Activated naive CD4-positive, alpha-beta T cell treated with anti-CD3 and anti-CD28 coated beads for 36 hours (primary cell): ENCODE measurements at regions of chr2 and their contacts with region 1.

Region 1: DNA sequence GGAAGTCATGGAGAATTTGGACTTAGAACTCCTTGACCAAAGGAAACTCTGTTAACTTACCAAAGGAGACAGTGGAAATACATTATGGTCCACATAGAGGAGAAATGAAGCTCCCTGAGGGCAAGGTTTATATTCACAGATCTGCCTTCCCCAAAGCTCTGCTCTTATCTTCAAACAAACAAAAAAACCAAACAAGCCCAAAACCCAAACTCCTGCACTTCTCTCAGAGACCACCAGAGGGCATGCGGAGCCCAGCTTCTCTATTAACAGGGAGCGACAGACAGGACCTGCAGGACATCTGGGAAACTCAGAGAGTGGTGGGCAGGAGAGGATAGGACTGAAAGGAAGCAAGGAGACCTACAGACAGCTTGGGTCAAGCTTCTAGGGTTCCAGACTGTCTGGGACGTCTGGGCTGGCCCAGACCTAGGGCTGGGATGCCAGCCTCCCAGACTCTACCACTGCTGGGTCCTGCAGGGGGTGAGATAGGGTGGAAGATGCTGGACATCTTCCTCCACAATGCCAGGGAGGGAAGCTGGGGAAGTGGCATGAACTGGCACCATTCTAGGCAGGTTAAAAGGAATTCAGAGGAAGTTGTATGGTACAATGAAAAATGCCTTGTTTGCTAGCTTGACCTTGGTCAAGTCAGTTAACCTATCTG is 4.0 kb upstream of the WNT10A start:
- DNase-seq: peak; percentile 86
- H3K4me3 Mint-ChIP-seq: no peak overlapping the region
- H3K27ac Mint-ChIP-seq: no peak overlapping the region
- H3K4me1 Mint-ChIP-seq: peaks cover 39% of the 10 kb centered on the region
- H3K27me3 Mint-ChIP-seq: peaks cover 41% of the 10 kb centered on the region

Region 2: GRCh38 chr2:218860950-218861381 is 15.7 kb before region 1 on chr2:
- CTCF ChIA-PET with region 1: interaction called, 22 read pairs
- intact Hi-C with region 1: no loop called
- DNase-seq: no peak
- H3K4me3 Mint-ChIP-seq: no peak overlapping the region
- H3K27ac Mint-ChIP-seq: no peak overlapping the region
- H3K4me1 Mint-ChIP-seq: peaks cover 13% of the 10 kb centered on the region
- H3K27me3 Mint-ChIP-seq: peaks cover 62% of the 10 kb centered on the region

Region 3: GRCh38 chr2:218892693-218893348 is 16.1 kb after region 1 on chr2:
- CTCF ChIA-PET with region 1: interaction called, 947 read pairs
- intact Hi-C with region 1: loop called (anchors 1 kb)
- DNase-seq: peak; percentile 90
- H3K4me3 Mint-ChIP-seq: peak overlapping the region; percentile 75
- H3K27ac Mint-ChIP-seq: peak overlapping the region; percentile 76
- H3K4me1 Mint-ChIP-seq: peaks cover 45% of the 10 kb centered on the region
- H3K27me3 Mint-ChIP-seq: no peaks in the 10 kb centered on the region

Region 4: DNA sequence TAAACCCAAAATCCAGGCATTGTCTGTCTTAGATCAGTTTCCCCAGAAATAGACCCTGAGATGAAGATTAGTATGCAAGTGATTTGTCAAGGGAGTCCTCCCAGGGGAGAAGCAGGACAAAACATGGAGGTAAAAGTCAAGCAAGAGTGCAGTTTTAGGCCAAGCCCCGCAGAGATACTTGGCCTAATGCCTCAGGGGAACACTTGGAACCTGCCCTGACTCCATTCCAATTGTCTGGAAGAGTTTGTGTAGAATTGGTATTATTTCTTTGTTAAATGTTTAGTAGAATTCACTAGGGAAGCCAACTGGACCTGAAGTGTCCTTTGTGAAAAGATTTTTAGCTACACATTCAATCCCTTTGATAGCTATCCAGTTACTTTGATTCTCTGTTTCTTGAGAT is 38.3 kb after region 1 on chr2:
- CTCF ChIA-PET with region 1: interaction called, 17 read pairs
- intact Hi-C with region 1: no loop called
- DNase-seq: no peak
- H3K4me3 Mint-ChIP-seq: no peak overlapping the region
- H3K27ac Mint-ChIP-seq: no peak overlapping the region
- H3K4me1 Mint-ChIP-seq: peaks cover 3% of the 10 kb centered on the region
- H3K27me3 Mint-ChIP-seq: peaks cover 8% of the 10 kb centered on the region

Region 5: GRCh38 chr2:219570194-219570923 is 693.7 kb after region 1 on chr2:
- CTCF ChIA-PET with region 1: no interaction called
- intact Hi-C with region 1: no loop called
- DNase-seq: no peak
- H3K4me3 Mint-ChIP-seq: peak overlapping the region; percentile 52
- H3K27ac Mint-ChIP-seq: no peak overlapping the region
- H3K4me1 Mint-ChIP-seq: no peaks in the 10 kb centered on the region
- H3K27me3 Mint-ChIP-seq: peaks cover 42% of the 10 kb centered on the region